ENCODE measurements at regions of chr7 and their contacts with region 1.

Region 1: GRCh38 chr7:5704534-5704922 is 76.9 kb downstream of the RNF216 start:
- DNase-seq: peak; percentile 76
- ATAC-seq: peak; percentile 72

Region 2: GRCh38 chr7:5494683-5495561 is 209.6 kb before region 1 on chr7:
- intact Hi-C with region 1: loop called (anchors 10 kb)
- DNase-seq: peak; percentile 87
- ATAC-seq: peak; percentile 78

Region 3: DNA sequence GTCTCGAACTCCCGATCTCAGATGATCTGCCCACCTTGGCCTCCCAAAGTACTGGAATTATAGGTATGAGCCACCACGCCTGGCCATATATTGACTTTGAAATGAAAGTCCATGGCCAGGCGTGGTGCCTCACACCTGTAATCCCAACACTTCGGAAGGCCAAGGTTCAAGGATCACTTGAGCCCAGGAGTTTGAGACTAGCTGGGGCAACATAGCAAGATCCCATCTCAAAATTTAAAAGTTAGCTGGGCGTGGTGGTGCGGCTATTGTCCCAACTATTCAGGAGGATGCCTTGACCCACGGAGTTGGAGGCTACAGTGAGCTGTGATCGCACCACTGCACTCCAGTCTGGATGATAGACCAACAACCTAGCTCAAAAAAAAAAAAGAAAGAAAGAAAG is 188.0 kb after region 1 on chr7:
- intact Hi-C with region 1: no loop called
- DNase-seq: no peak
- ATAC-seq: no peak